ENCODE measurements at regions of chr4 and their contacts with region 1.

Region 1: DNA sequence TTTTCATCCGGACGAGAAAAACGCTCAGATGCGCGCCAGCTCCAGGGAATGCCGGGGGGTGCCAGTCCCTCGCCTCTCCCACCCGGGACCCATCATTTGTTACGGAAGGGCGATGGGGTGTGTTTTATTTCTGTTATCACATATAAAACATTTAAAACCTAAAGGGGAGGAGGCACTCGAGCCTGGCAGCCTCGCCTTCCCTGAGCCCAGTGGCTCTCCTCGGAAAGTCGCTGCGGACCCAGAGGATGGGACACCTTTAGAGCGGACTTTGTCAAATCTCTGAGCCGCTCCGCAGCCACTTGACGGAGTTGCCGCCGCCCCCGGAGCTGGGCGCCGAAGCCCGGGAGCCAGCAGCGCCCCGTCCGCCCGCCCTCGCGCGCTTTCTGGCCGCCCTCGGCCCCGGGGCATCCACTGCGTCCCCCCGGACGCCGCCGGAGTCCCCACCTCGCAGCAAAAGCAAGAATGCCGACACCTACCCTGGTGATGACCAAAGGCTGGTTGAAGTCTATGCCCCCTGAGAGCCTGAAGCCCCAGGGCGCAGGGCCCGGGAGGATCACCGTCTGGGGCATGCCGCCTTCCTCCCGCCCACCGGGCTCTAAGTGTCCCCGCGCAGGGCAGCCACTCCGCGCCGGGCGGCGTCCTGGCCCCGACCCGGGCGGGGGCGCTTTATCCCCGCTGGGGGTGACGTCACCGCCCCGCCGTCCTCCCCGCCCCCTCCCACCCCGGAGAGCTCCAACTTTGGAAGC is at the start of gene PDLIM3:
- DNase-seq: peak; percentile 12
- ATAC-seq: peak; percentile 49
- H3K4me3 Mint-ChIP-seq: peak within 1 kb of the TSS; percentile 17
- H3K27ac Mint-ChIP-seq: no peak within 1 kb of the TSS
- H3K4me1 Mint-ChIP-seq: no peaks in the 10 kb centered on the region
- H3K27me3 Mint-ChIP-seq: peaks cover 35% of the 10 kb centered on the region
- CTCF ChIP-seq: no peak
- total RNA-seq, gene PDLIM3: not detected

Region 2: GRCh38 chr4:185587427-185588161 is 52.6 kb after region 1 on chr4:
- CTCF ChIA-PET with region 1: no interaction called
- POLR2A ChIA-PET with region 1: no interaction called
- intact Hi-C with region 1: loop called (anchors 2 kb)
- DNase-seq: peak; percentile 87
- ATAC-seq: peak; percentile 96
- H3K4me3 Mint-ChIP-seq: peak overlapping the region; percentile 48
- H3K27ac Mint-ChIP-seq: peak overlapping the region; percentile 60
- H3K4me1 Mint-ChIP-seq: peaks cover 13% of the 10 kb centered on the region
- H3K27me3 Mint-ChIP-seq: peaks cover 48% of the 10 kb centered on the region
- CTCF ChIP-seq: no peak